ENCODE measurements at regions of chr15 and their contacts with region 1.

Region 1: DNA sequence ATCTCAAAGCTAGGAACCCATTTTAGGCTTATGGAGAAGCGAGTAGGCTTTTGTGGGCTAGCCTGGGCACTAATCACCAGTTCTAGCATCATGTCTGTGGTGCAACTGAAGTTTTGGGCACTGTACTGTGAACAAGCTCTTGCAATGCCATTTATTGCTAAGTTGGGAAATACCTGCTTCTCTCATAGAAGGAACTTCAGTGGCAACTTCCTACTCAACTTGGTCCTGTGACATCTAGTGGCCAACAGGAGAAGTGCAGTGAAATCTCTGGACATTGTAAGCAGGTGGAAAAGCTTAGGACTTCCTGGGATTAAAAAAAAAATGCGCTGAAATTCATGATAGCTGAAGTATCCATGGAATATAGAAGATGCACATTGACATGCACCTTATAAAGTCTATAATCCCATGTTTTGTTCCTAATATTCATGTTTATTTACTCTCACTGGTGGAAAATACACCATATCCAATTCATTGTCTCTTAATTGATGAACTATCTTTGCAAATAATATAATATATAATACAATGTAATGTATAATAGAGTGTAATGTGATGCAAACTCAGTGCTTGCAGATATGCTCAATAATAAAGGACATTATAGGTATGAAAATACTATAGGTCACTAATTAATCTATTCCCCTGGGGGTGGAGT is 6.5 kb upstream of the ALDH1A3 start:
- DNase-seq: peak; percentile 74
- CTCF ChIP-seq: peak; percentile 87

Region 2: DNA sequence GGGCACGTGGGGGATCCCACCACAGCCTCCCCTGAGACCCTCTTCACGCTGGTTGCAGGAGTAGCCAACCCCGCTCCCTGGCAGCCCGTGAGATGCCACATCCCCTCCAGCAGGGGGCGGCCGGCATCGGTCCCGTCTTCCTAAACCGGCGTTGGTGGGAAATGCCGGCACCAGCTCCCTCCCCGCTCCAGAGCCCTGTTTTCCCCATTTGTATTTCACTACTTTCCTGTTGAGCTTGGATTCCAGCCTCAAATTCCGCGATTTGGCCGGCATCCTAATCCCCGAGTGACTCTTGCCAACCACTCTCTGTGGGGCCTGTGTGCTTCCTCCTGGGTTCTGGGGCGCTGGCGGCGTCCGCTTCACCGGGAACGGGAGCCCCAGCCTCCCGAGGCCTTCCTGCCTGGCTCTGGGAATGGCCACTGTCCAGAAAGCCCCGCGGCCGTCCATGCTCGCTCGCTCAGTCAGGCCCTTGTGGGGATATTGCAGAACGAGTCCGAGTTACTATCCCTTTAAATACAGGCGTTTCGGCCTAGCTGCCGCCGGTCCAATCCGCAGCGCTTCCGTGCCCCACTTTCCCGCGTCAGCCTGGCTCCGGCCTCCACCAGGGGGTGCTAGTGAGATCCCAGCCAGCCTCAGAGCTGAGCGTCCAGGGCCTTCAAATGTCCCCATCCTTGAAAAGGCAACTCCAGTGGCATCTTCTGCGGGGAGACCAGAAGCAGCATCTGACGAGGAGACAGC is 523.3 kb before region 1 on chr15:
- CTCF ChIA-PET with region 1: interaction called, 10 read pairs
- POLR2A ChIA-PET with region 1: no interaction called
- DNase-seq: peak; percentile 77
- CTCF ChIP-seq: peak; percentile 81

Region 3: GRCh38 chr15:100627789-100628395 is 245.3 kb before region 1 on chr15:
- CTCF ChIA-PET with region 1: interaction called, 12 read pairs
- POLR2A ChIA-PET with region 1: no interaction called
- DNase-seq: peak; percentile 57
- CTCF ChIP-seq: peak; percentile 77

Region 4: DNA sequence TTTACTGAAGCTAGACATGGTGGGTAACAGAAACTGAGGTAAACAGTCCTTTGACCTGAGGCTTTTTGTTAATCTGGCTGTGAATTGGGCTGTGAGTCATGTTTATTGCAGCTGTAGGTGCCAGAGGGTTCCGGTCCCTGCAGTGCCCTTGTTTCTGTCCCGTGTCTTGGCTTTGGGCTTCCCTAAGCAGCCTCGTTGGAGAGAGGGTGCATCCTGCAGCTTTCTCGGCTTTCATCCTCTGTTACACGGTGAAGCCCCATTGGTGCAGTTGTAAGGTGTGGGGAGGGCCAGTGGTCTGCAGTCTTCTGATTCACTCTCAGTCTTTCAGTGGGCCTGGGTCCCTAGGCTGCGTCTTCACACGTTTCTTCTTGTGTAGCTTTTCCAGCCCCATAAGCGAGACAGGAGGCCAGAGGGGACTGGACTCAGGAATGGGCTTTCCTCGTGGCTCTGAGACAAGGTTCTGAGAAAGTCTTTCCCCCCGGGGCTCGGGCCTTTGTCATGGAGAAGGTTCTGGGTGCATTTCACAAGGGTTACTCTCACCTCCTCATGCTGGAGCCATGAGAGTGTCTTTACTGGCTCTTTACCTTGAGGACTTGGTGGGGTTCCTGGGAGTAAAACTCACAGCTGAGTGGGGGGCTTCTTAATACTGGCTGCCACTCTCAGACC is 237.6 kb before region 1 on chr15:
- CTCF ChIA-PET with region 1: interaction called, 11 read pairs
- POLR2A ChIA-PET with region 1: no interaction called
- DNase-seq: no peak
- CTCF ChIP-seq: no peak

Region 5: DNA sequence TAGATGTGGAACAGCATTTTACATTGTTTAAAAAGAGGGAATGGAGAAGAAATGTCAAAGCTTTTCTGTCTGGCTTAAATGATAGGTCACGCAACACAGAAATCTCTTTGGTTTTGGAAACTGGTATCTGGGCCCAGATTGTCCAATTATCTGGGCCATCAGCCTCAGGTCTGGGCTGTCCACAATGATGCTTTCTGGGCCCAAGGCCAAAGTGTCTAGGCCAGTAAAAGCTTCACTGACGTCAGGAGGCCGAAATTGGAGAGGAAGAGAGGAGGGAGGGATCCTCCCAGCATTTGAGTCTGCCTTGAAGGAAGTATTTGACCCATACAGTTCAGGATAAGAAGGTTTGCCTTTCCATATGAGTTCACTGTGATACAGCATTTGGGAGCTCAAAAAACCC is 54.2 kb before region 1 on chr15:
- CTCF ChIA-PET with region 1: no interaction called
- POLR2A ChIA-PET with region 1: no interaction called
- DNase-seq: no peak
- CTCF ChIP-seq: no peak

Region 6: DNA sequence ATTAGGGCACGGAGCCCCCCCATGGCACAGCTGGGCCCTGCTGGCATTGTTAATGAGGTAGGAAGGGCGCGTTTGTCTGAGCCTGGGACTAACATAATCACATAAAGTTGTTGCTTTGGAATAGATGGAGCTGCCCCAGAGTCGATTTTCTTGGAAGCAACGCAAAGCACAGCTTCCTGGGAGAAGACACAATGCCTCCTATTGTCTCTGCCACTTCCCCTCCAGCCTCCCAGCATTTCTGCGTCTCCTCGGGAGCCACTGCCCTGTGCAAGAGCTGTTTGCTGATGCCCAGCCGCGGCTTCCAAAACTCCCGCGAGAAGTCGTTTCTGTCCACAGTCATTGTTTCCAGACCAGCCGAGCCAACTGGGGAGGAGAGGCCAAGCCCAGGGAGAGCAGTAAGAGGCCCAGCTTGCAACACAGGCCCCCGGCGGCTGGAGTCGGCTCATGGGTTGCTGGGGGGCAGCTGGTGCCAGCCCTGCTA is 11.6 kb before region 1 on chr15:
- CTCF ChIA-PET with region 1: interaction called, 13 read pairs
- POLR2A ChIA-PET with region 1: no interaction called
- DNase-seq: no peak
- CTCF ChIP-seq: no peak

Region 7: GRCh38 chr15:100891307-100892008 is 18.3 kb after region 1 on chr15:
- CTCF ChIA-PET with region 1: interaction called, 10 read pairs
- POLR2A ChIA-PET with region 1: no interaction called
- DNase-seq: no peak
- CTCF ChIP-seq: no peak

Measured in GM10248 (cell line).